B cell (primary cell): ENCODE measurements at regions of chr11 and their contacts with region 1.

Region 1: GRCh38 chr11:128757235-128757711 is 63.4 kb downstream of the FLI1 start:
- DNase-seq: peak; percentile 90
- ATAC-seq: peak; percentile 82
- H3K4me3 ChIP-seq: peak overlapping the region in 1 of 5 experiments; percentile 25
- H3K4me3 Mint-ChIP-seq: peak overlapping the region; percentile 17
- H3K27ac ChIP-seq: peak overlapping the region; percentile 78 to 79
- H3K27ac Mint-ChIP-seq: peak overlapping the region; percentile 71
- H3K4me1 ChIP-seq: peaks cover 53 to 74% of the 10 kb centered on the region in 2 donors
- H3K4me1 Mint-ChIP-seq: peaks cover 82% of the 10 kb centered on the region
- H3K27me3 ChIP-seq: no peaks in the 10 kb centered on the region
- H3K27me3 Mint-ChIP-seq: no peaks in the 10 kb centered on the region
- CTCF ChIP-seq: peak; percentile 83

Region 2: GRCh38 chr11:128472128-128473089 is 284.9 kb before region 1 on chr11:
- CTCF ChIA-PET with region 1: interaction called, 5 read pairs
- POLR2A ChIA-PET with region 1: no interaction called
- intact Hi-C with region 1: loop called (anchors 2 kb)
- DNase-seq: peak; percentile 57
- ATAC-seq: peak; percentile 9
- H3K4me3 ChIP-seq: peak overlapping the region in 2 of 5 experiments; percentile 15 to 54
- H3K4me3 Mint-ChIP-seq: peak overlapping the region; percentile 71
- H3K27ac ChIP-seq: peak overlapping the region; percentile 74 to 90
- H3K27ac Mint-ChIP-seq: peak overlapping the region; percentile 89
- H3K4me1 ChIP-seq: peaks cover 98 to 100% of the 10 kb centered on the region in 2 donors
- H3K4me1 Mint-ChIP-seq: peaks cover 97% of the 10 kb centered on the region
- H3K27me3 ChIP-seq: no peaks in the 10 kb centered on the region
- H3K27me3 Mint-ChIP-seq: no peaks in the 10 kb centered on the region
- CTCF ChIP-seq: no peak

Region 3: DNA sequence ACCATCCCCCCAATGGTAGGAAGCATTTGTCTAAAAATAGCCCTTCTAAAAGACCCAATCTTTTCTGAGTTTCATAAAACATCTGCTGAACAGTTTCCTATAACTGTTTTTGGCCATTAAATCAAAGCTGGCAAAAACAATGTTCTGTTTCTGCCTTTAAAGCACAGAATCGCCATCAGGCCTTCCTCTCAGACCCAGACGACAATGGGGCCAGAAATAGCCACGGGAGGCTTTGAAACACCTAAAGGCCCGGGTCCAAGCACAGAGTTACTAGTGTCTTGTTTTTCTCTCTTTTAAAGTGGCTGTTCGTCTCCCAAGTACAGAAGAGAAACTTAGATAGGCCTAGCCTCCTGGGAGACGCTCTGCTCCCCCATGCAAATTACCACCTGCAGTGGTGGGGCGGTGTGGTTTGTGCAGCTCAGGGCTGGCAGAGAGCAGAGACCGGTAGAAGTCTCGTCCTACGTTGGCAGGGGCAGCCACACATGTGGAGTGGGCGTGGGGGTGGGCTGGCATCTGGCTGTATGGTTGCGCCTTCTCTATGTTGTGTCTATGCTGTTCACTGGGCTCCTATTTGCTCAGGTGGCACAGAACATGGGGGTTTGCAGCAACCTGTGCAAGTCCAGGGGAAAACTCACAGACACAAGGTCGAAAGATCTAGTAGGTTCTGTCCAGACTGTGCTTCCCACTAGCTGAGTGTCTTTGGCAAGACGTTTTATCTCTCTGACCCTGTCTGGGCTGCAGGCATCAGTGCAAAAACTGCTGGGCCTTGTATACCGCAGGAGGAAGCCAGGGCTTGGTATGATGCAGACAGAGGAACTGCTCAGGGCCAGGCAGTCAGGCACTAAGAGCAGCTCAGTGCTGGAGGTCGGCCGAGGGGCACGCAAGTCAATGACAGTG is 146.3 kb before region 1 on chr11:
- CTCF ChIA-PET with region 1: interaction called, 102 read pairs
- POLR2A ChIA-PET with region 1: interaction called, 5 read pairs
- intact Hi-C with region 1: no loop called
- DNase-seq: peak; percentile 95
- ATAC-seq: peak; percentile 89
- H3K4me3 ChIP-seq: peak overlapping the region in 3 of 5 experiments; percentile 20 to 61 (median 29)
- H3K4me3 Mint-ChIP-seq: peak overlapping the region; percentile 58
- H3K27ac ChIP-seq: peak overlapping the region; percentile 93 to 95
- H3K27ac Mint-ChIP-seq: peak overlapping the region; percentile 93
- H3K4me1 ChIP-seq: peaks cover 85 to 87% of the 10 kb centered on the region in 2 donors
- H3K4me1 Mint-ChIP-seq: peaks cover 89% of the 10 kb centered on the region
- H3K27me3 ChIP-seq: no peaks in the 10 kb centered on the region
- H3K27me3 Mint-ChIP-seq: no peaks in the 10 kb centered on the region
- CTCF ChIP-seq: no peak

Region 4: GRCh38 chr11:128713595-128713994 is 43.7 kb before region 1 on chr11:
- CTCF ChIA-PET with region 1: interaction called, 12 read pairs
- POLR2A ChIA-PET with region 1: no interaction called
- intact Hi-C with region 1: no loop called
- DNase-seq: peak; percentile 65
- ATAC-seq: peak; percentile 55
- H3K4me3 ChIP-seq: no peak overlapping the region
- H3K4me3 Mint-ChIP-seq: peak overlapping the region; percentile 69
- H3K27ac ChIP-seq: peak overlapping the region; percentile 54 to 88
- H3K27ac Mint-ChIP-seq: peak overlapping the region; percentile 90
- H3K4me1 ChIP-seq: peaks cover 88% of the 10 kb centered on the region in 2 donors
- H3K4me1 Mint-ChIP-seq: peaks cover 91% of the 10 kb centered on the region
- H3K27me3 ChIP-seq: no peaks in the 10 kb centered on the region
- H3K27me3 Mint-ChIP-seq: no peaks in the 10 kb centered on the region
- CTCF ChIP-seq: no peak

Region 5: DNA sequence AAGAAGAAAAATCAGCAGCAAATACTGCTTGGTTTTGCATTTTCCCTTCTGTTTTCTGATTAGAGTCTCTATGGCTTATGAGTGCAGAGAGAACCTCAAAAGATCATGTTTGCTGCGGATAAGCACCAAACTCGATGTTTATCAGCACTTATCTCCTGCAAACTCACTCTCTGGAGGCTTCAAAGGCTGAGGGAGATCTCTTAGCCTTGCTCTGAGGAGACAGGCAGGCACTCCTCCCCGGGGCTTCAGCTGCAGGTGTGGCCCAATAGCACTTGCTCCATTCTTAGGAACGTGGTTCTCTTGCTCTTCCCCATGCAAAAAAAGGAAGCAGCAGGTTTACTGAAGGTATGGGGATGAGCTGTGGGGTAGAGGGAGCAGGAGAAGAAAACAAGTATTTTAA is 18.3 kb before region 1 on chr11:
- CTCF ChIA-PET with region 1: interaction called, 38 read pairs
- POLR2A ChIA-PET with region 1: interaction called, 4 read pairs
- intact Hi-C with region 1: loop called (anchors 2 kb)
- DNase-seq: peak; percentile 26
- ATAC-seq: no peak
- H3K4me3 ChIP-seq: no peak overlapping the region
- H3K4me3 Mint-ChIP-seq: peak overlapping the region; percentile 66
- H3K27ac ChIP-seq: peak overlapping the region; percentile 36 to 80
- H3K27ac Mint-ChIP-seq: peak overlapping the region; percentile 87
- H3K4me1 ChIP-seq: peaks cover 89 to 91% of the 10 kb centered on the region in 2 donors
- H3K4me1 Mint-ChIP-seq: peaks cover 88% of the 10 kb centered on the region
- H3K27me3 ChIP-seq: no peaks in the 10 kb centered on the region
- H3K27me3 Mint-ChIP-seq: no peaks in the 10 kb centered on the region
- CTCF ChIP-seq: no peak

Region 6: DNA sequence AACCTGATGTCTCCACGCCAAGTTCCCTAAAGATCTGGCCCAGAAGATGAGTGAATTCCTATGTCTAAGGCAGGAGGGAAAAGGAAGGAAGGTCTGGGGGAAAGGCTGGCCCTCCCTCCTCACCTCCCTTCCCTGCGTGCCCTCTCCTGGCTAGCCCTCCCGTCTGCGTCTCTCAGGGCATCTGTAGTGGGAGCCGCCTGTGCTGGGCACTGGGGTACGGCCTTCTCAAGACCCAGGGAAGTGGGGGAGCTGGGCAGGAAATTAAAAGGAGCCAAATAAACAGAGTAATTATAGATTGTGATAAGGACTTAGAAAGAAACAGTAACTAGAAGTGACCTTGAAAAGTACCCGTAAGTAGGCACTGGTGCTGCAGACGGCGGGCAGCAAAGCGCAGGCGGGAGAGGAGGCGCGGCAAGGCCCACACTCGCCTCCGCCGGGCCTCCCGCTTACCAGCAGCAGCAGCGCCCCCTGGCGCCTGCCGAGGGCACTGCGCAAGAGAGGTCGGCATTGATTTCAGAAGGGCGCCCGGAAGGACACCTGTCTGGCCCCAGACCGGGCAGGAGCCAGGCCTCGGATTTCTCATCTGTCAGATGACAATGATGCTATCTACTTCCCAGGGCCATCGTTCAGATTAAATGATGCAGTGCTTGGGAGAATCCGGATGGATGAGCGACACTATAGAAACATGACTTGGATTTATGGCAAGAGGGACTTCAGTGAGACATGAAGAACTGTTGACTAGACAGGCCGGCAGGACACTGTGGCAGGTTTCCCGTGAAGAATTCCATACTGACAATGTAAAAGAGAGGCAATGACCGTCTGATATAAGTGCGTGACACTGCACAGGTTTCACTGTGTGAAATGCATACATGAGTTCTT is 102.5 kb after region 1 on chr11:
- CTCF ChIA-PET with region 1: interaction called, 11 read pairs
- POLR2A ChIA-PET with region 1: no interaction called
- intact Hi-C with region 1: loop called (anchors 1 kb)
- DNase-seq: peak; percentile 87
- ATAC-seq: peak; percentile 99
- H3K4me3 ChIP-seq: no peak overlapping the region
- H3K4me3 Mint-ChIP-seq: no peak overlapping the region
- H3K27ac ChIP-seq: no peak overlapping the region
- H3K27ac Mint-ChIP-seq: peak overlapping the region; percentile 59
- H3K4me1 ChIP-seq: peaks cover 9 to 17% of the 10 kb centered on the region in 2 donors
- H3K4me1 Mint-ChIP-seq: peaks cover 21% of the 10 kb centered on the region
- H3K27me3 ChIP-seq: no peaks in the 10 kb centered on the region
- H3K27me3 Mint-ChIP-seq: peaks cover 3% of the 10 kb centered on the region
- CTCF ChIP-seq: peak; percentile 100